IMR-90 (cell line): ENCODE measurements at regions of chr7 and their contacts with region 1.

Region 1: DNA sequence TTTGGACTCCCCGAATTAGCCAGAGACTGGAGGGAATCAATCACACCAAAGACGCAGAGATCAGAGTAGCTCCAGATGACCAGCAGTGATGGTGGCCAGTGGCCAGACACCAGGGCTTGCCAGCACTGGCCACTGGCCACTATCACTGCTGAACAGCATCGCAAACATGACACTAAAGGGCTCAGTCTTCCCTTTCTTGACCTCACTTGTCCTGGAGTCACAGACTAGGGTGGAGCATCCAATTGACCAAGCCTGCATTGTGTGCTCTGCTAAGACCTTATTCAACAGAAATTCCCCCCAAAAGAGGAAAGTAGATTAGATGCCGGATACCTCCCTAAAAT is 234.7 kb downstream of the CREB5 start:
- DNase-seq: no peak
- ATAC-seq: no peak
- H3K4me3 ChIP-seq: no peak overlapping the region
- H3K27ac ChIP-seq: no peak overlapping the region
- H3K4me1 ChIP-seq: no peaks in the 10 kb centered on the region
- H3K27me3 ChIP-seq: no peaks in the 10 kb centered on the region; the same call in 1 of the 2 replicates
- CTCF ChIP-seq: no peak
- POLR2A ChIP-seq: no peak
- RAD21 ChIP-seq: no peak

Region 2: GRCh38 chr7:28685644-28686417 is 38.8 kb after region 1 on chr7:
- CTCF ChIA-PET with region 1: no interaction called
- POLR2A ChIA-PET with region 1: no interaction called
- dilution Hi-C with region 1: no loop called
- in situ Hi-C with region 1: no loop called
- intact Hi-C with region 1: loop called (anchors 5 kb)
- DNase-seq: peak; percentile 99
- ATAC-seq: peak; percentile 96
- H3K4me3 ChIP-seq: peak overlapping the region; percentile 45
- H3K27ac ChIP-seq: peak overlapping the region; percentile 71
- H3K4me1 ChIP-seq: peaks cover 4% of the 10 kb centered on the region
- H3K27me3 ChIP-seq: no peaks in the 10 kb centered on the region
- CTCF ChIP-seq: no peak
- POLR2A ChIP-seq: peak; percentile 93
- RAD21 ChIP-seq: 0 out of 2 replicates have a peak, but pooled peaks have one; percentile 4